ENCODE measurements at regions of chr2 and their contacts with region 1.

Region 1: DNA sequence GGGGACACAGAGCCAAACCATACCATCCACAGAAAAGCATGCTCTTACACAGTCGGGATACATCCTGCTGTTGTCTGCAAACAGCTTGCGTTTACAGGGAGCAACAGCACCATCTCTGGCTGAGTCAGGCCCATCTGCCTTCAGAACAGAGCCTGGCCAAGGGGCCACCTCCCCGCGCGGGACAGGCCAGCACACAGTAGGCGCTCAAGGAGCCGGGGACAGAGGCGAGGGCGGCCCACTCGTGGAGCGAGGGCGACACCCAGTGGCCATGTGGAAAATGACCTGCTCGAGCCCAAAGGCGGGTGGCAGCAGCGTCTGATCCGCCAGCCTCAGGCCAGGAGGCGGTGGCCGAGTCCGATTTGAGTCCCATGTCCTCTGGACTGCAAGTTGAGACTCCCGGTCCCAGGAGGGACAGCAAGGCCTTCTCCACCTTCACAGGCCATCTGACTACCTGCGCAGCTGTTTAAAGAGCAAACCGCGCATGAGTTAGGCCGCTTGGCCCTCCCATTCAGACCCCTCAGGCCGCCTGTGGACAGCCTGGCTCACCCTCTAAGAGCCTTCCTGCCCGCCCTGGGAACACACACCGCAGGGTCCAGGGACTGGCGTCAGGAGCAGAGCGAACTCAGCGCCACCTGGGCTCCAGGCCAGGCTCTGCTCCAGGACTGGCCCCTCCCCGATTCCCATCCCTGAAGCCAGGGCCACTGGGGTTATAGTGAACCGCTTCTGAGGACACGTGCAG is 38.3 kb downstream of the TTC32 start:
- DNase-seq: peak; percentile 60 to 81 (median 73)
- H3K4me3 ChIP-seq: peak overlapping the region in 1 of 4 donors; percentile 8
- H3K27ac ChIP-seq: no peak overlapping the region
- H3K4me1 ChIP-seq: peaks cover 4 to 8% of the 10 kb centered on the region in 2 donors
- H3K27me3 ChIP-seq: no peaks in the 10 kb centered on the region
- CTCF ChIP-seq: peak; percentile 95 to 99 (median 96)
- POLR2A ChIP-seq: no peak

Region 2: GRCh38 chr2:18520451-18521425 is 1342.7 kb before region 1 on chr2:
- intact Hi-C with region 1: loop called (anchors 5 kb)
- DNase-seq: peak; percentile 72 to 93 (median 80)
- H3K4me3 ChIP-seq: no peak overlapping the region
- H3K27ac ChIP-seq: no peak overlapping the region
- H3K4me1 ChIP-seq: peaks cover 0 to 5% of the 10 kb centered on the region in 2 donors
- H3K27me3 ChIP-seq: no peaks in the 10 kb centered on the region
- CTCF ChIP-seq: peak; percentile 79 to 92 (median 86)
- POLR2A ChIP-seq: no peak

Region 3: GRCh38 chr2:18749912-18750526 is 1113.5 kb before region 1 on chr2:
- intact Hi-C with region 1: loop called in 1 of 2 experiments (anchors 10 kb)
- DNase-seq: peak; percentile 42 to 76 (median 63)
- H3K4me3 ChIP-seq: no peak overlapping the region
- H3K27ac ChIP-seq: no peak overlapping the region
- H3K4me1 ChIP-seq: no peaks in the 10 kb centered on the region
- H3K27me3 ChIP-seq: no peaks in the 10 kb centered on the region
- CTCF ChIP-seq: peak; percentile 71 to 90 (median 85)
- POLR2A ChIP-seq: no peak